MCF 10A (cell line): ENCODE measurements at regions of chr20 and their contacts with region 1.

Region 1: GRCh38 chr20:10673988-10674711 is at the start of gene JAG1:
- DNase-seq: peak; percentile 95
- H3K4me3 Mint-ChIP-seq: peak within 1 kb of the TSS; percentile 98
- H3K27ac Mint-ChIP-seq: peak within 1 kb of the TSS; percentile 91
- H3K4me1 Mint-ChIP-seq: peaks cover 29% of the 10 kb centered on the region
- H3K27me3 Mint-ChIP-seq: no peaks in the 10 kb centered on the region
- CTCF ChIP-seq: no peak
- total RNA-seq, gene JAG1: 62.5 and 88.0 TPM in 2 replicates

Region 2: DNA sequence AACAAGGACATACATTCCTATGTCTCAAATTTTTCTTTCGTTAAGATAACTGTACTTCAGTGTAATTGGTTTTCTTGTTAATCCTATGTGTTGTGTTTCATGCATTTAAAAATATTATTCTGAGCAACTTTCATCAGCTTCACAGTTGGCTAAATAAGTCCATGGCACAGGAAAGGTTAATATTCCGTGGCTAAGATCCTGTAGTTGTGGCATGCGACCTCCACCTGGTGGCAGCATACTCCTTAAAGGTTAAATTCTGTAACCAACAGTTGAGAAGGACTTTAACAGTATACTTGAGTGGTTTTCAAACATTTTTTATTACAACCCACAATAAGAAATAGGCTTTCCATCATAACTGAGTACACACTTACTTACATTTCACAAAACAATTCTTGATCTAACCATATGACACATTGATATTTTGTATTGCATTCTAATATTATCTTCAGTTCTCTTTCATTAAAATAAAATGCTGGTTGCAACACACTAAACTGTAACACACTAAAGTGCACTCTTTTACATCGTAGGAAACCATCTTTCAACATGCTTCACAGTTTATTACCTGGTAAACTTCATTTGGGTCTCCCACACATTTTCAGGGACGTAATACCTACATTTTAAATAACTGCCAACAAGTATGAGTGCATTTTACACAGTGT is 120.7 kb before region 1 on chr20:
- CTCF ChIA-PET with region 1: interaction called, 35 read pairs
- POLR2A ChIA-PET with region 1: interaction called, 60 read pairs
- intact Hi-C with region 1: loop called (anchors 1 kb)
- DNase-seq: peak; percentile 76
- H3K4me3 Mint-ChIP-seq: no peak overlapping the region
- H3K27ac Mint-ChIP-seq: no peak overlapping the region
- H3K4me1 Mint-ChIP-seq: peaks cover 27% of the 10 kb centered on the region
- H3K27me3 Mint-ChIP-seq: no peaks in the 10 kb centered on the region
- CTCF ChIP-seq: peak; percentile 82

Region 3: DNA sequence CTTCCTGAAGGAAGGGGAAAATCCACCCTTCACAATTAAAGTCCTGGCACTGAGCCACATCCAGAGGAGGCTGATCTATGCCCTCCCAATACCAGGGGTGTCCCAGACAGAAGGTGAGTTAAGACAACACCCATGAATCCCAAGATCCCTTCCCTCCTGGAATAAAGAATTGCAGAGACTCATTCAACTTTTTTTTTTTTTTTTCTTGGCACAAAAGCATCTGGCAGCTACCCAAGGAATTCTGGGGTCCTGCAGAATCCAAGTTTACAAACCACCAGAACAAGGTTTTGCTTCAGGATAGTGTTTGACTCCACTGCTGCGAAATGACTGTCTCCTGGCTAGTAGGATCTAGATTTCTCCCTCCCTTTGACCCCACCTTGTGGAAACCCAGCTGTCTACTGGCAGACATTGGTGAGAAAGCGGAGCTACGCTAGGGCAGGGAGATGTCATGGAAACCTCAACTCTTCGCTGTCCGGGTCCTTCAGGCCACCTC is 37.8 kb before region 1 on chr20:
- CTCF ChIA-PET with region 1: interaction called, 7 read pairs
- POLR2A ChIA-PET with region 1: interaction called, 51 read pairs
- intact Hi-C with region 1: no loop called
- DNase-seq: peak; percentile 90
- H3K4me3 Mint-ChIP-seq: peak overlapping the region; percentile 29
- H3K27ac Mint-ChIP-seq: peak overlapping the region; percentile 85
- H3K4me1 Mint-ChIP-seq: peaks cover 44% of the 10 kb centered on the region
- H3K27me3 Mint-ChIP-seq: no peaks in the 10 kb centered on the region
- CTCF ChIP-seq: no peak

Region 4: GRCh38 chr20:10798811-10799210 is 124.7 kb after region 1 on chr20:
- CTCF ChIA-PET with region 1: interaction called, 3 read pairs
- POLR2A ChIA-PET with region 1: interaction called, 13 read pairs
- intact Hi-C with region 1: no loop called
- DNase-seq: peak; percentile 84
- H3K4me3 Mint-ChIP-seq: no peak overlapping the region
- H3K27ac Mint-ChIP-seq: peak overlapping the region; percentile 7
- H3K4me1 Mint-ChIP-seq: no peaks in the 10 kb centered on the region
- H3K27me3 Mint-ChIP-seq: no peaks in the 10 kb centered on the region
- CTCF ChIP-seq: no peak

Region 5: DNA sequence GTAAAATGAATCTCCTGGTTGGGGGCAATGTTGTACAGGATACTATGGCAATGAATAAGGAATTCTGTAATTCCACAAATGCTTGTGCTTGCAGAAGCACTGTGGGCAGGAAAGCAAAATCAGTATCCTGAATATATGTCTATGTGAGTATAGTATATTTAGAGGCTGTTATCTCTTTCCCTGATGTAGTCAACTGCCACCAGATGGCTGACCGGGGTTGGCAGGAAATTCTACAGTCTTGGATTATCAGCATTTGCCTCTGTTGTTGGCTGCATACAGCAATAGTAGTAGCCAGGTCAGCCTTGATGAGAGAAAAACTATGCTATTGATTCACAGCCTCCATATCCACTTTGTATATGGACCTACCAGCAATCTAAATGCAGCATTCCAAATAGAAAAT is 424.7 kb after region 1 on chr20:
- CTCF ChIA-PET with region 1: interaction called, 5 read pairs
- POLR2A ChIA-PET with region 1: no interaction called
- intact Hi-C with region 1: loop called (anchors 2 kb)
- DNase-seq: peak; percentile 25
- H3K4me3 Mint-ChIP-seq: no peak overlapping the region
- H3K27ac Mint-ChIP-seq: no peak overlapping the region
- H3K4me1 Mint-ChIP-seq: no peaks in the 10 kb centered on the region
- H3K27me3 Mint-ChIP-seq: no peaks in the 10 kb centered on the region
- CTCF ChIP-seq: peak; percentile 11

Region 6: GRCh38 chr20:11350126-11351005 is 676.2 kb after region 1 on chr20:
- CTCF ChIA-PET with region 1: interaction called, 22 read pairs
- POLR2A ChIA-PET with region 1: interaction called, 12 read pairs
- intact Hi-C with region 1: loop called (anchors 5 kb)
- DNase-seq: peak; percentile 95
- H3K4me3 Mint-ChIP-seq: peak overlapping the region; percentile 39
- H3K27ac Mint-ChIP-seq: peak overlapping the region; percentile 24
- H3K4me1 Mint-ChIP-seq: peaks cover 24% of the 10 kb centered on the region
- H3K27me3 Mint-ChIP-seq: no peaks in the 10 kb centered on the region
- CTCF ChIP-seq: peak; percentile 15